ENCODE measurements at regions of chr5 and their contacts with region 1.

Region 1: DNA sequence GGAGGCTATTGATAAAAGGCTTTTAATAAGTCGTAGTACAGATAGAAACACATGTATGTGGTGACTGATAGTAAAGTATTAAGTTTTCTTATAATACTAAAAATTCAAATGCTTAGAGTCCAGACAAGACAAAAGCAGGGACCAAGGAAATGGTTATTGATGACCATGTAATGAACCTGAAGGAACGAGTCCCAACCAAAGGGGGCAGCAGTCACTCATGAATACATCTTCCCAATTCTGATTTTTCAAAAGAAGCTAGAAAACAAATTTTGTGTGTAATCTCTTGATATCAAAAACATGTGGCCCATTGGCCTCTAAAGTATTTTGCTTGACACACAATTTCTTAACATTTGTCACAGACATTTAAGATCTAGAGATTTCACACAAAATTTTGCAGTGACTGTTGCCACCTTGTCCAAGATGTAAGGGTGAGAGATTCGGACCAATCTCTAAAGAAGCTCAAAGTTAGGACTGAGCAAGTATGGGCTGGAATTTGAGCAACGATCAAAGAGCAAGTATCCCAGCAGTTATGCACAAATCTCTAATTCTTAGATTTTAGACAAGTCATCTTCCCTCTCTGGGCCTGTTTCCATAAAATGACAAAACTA is 66.8 kb downstream of the ARL15 start:
- DNase-seq: peak in 4 of 5 donors; percentile 21 to 36 (median 28)
- H3K4me3 ChIP-seq: no peak overlapping the region
- H3K4me3 Mint-ChIP-seq: no peak overlapping the region
- H3K27ac ChIP-seq: no peak overlapping the region
- H3K27ac Mint-ChIP-seq: no peak overlapping the region
- H3K4me1 ChIP-seq: no peaks in the 10 kb centered on the region
- H3K4me1 Mint-ChIP-seq: peaks cover 3 to 9% (median 6%) of the 10 kb centered on the region in 4 donors
- H3K27me3 ChIP-seq: no peaks in the 10 kb centered on the region
- H3K27me3 Mint-ChIP-seq: no peaks in the 10 kb centered on the region

Region 2: GRCh38 chr5:53749621-53750020 is 494.0 kb before region 1 on chr5:
- CTCF ChIA-PET with region 1: no interaction called
- POLR2A ChIA-PET with region 1: no interaction called
- intact Hi-C with region 1: no loop called
- DNase-seq: no peak
- H3K4me3 ChIP-seq: no peak overlapping the region
- H3K4me3 Mint-ChIP-seq: no peak overlapping the region
- H3K27ac ChIP-seq: no peak overlapping the region
- H3K27ac Mint-ChIP-seq: no peak overlapping the region
- H3K4me1 ChIP-seq: no peaks in the 10 kb centered on the region
- H3K4me1 Mint-ChIP-seq: no peaks in the 10 kb centered on the region
- H3K27me3 ChIP-seq: no peaks in the 10 kb centered on the region
- H3K27me3 Mint-ChIP-seq: no peaks in the 10 kb centered on the region

Region 3: DNA sequence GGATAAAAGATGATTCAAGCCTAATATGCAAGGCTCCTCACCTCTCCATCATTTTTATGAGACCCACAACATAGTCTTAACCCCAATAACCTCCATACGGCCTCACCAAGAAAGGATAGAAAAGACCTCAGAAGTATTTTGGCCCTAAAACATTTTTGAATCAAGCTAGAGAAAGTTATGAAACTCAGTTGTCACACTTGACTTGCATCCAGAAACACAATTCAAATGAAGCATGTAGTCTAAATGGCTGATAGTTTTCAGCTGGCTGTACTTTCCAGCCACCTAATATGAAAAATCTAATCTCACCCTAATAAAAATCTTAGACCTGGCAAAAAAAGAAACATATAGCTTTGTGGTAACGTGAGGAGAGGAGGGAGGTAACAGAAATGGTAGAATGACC is 49.3 kb before region 1 on chr5:
- CTCF ChIA-PET with region 1: no interaction called
- POLR2A ChIA-PET with region 1: no interaction called
- intact Hi-C with region 1: no loop called
- DNase-seq: no peak
- H3K4me3 ChIP-seq: no peak overlapping the region
- H3K4me3 Mint-ChIP-seq: no peak overlapping the region
- H3K27ac ChIP-seq: no peak overlapping the region
- H3K27ac Mint-ChIP-seq: peak overlapping the region in 1 of 7 donors; percentile 17
- H3K4me1 ChIP-seq: no peaks in the 10 kb centered on the region
- H3K4me1 Mint-ChIP-seq: peaks cover 20 to 27% (median 24%) of the 10 kb centered on the region in 4 donors
- H3K27me3 ChIP-seq: no peaks in the 10 kb centered on the region
- H3K27me3 Mint-ChIP-seq: no peaks in the 10 kb centered on the region

Region 4: DNA sequence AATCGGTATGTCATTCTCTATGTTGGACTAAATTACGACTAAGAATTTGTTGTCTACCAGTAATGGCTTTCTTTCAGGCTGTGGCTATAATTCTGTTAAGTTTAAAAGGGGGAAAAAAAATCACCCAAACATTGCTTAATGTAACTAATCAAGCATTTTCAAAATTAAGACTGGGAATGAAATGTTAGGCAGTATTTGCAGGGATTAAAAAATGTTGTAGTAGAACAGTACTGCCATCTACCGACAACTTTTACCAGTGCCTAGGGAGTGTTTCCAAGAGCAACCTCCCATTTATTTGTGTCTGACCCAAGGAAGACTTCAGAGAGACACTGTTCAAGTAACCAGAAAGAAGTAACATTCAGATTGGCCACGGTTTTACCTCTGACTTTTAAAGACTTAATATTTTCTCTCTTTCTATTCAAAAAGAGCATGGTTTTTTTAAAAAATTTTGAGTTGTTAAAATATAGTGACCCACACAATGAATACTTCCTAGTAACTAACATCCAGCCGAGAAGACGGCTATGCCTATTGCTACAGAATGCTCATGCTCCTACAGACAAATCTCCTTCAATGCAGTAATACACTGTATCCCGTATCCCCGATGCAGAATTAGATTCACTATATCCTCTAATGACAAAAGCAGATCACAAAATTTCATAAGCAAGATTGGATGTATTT is 25.6 kb before region 1 on chr5:
- CTCF ChIA-PET with region 1: no interaction called
- POLR2A ChIA-PET with region 1: no interaction called
- intact Hi-C with region 1: no loop called
- DNase-seq: peak in 4 of 5 donors; percentile 10 to 32 (median 22)
- H3K4me3 ChIP-seq: no peak overlapping the region
- H3K4me3 Mint-ChIP-seq: no peak overlapping the region
- H3K27ac ChIP-seq: no peak overlapping the region
- H3K27ac Mint-ChIP-seq: no peak overlapping the region
- H3K4me1 ChIP-seq: no peaks in the 10 kb centered on the region
- H3K4me1 Mint-ChIP-seq: peaks cover 3 to 11% (median 7%) of the 10 kb centered on the region in 4 donors
- H3K27me3 ChIP-seq: no peaks in the 10 kb centered on the region
- H3K27me3 Mint-ChIP-seq: no peaks in the 10 kb centered on the region

Region 5: DNA sequence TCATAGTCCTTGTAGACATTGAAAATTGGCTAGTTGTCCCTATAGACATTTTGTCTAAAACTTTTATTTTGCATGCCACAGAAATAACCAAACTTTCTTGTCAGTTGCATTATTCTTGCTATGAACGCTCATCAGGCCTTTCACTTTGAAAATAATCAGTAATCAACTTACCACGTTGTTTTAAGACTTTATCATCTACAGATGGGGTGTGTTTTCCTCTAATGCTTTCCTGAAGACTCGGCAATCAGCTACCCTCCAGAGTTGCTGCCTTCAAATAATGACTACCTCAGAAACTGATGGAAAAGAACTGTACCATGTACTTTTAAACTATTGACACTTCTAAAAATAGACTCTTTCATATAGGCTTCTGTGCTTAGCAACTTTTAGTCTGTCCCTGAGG is 178.4 kb after region 1 on chr5:
- CTCF ChIA-PET with region 1: interaction called, 34 read pairs
- POLR2A ChIA-PET with region 1: no interaction called
- intact Hi-C with region 1: loop called (anchors 1 kb)
- DNase-seq: no peak
- H3K4me3 ChIP-seq: no peak overlapping the region
- H3K4me3 Mint-ChIP-seq: no peak overlapping the region
- H3K27ac ChIP-seq: no peak overlapping the region
- H3K27ac Mint-ChIP-seq: no peak overlapping the region
- H3K4me1 ChIP-seq: no peaks in the 10 kb centered on the region
- H3K4me1 Mint-ChIP-seq: no peaks in the 10 kb centered on the region
- H3K27me3 ChIP-seq: no peaks in the 10 kb centered on the region
- H3K27me3 Mint-ChIP-seq: peaks cover 9 to 16% of the 10 kb centered on the region in 2 donors

Region 6: GRCh38 chr5:54619731-54620547 is 376.4 kb after region 1 on chr5:
- CTCF ChIA-PET with region 1: no interaction called
- POLR2A ChIA-PET with region 1: no interaction called
- intact Hi-C with region 1: no loop called
- DNase-seq: no peak
- H3K4me3 ChIP-seq: no peak overlapping the region
- H3K4me3 Mint-ChIP-seq: no peak overlapping the region
- H3K27ac ChIP-seq: no peak overlapping the region
- H3K27ac Mint-ChIP-seq: no peak overlapping the region
- H3K4me1 ChIP-seq: no peaks in the 10 kb centered on the region
- H3K4me1 Mint-ChIP-seq: peaks cover 0 to 6% (median 5%) of the 10 kb centered on the region in 4 donors
- H3K27me3 ChIP-seq: no peaks in the 10 kb centered on the region
- H3K27me3 Mint-ChIP-seq: peaks cover 0 to 1% of the 10 kb centered on the region in 2 donors

Measured in CD4-positive, alpha-beta memory T cell (primary cell).